PC-3 (cell line): ENCODE measurements at regions of chr14 and their contacts with region 1.

Region 1: DNA sequence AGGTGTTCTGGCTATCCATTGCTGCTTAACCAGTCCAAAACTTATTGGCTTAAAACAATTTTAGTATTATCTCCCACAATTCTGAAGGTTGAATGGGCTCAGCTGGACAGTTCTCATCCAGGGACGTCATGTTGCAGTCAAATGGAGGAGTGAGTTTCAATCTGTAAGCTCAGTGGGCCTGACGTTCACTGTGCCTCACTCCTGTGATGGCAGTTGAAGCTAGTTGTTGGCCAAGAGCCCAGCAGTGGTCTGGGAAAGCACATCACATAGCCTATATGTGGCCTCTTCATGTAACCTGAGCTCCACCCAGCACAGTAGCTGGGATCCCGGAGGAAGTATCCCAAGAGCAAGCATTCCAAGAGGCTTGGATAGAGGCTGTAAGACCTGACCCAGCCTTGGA is 40.6 kb upstream of the CDKN3 start:
- DNase-seq: peak; percentile 100
- ATAC-seq: peak; percentile 83
- H3K4me3 ChIP-seq: peak overlapping the region; percentile 27
- H3K27ac ChIP-seq: peak overlapping the region; percentile 88
- H3K4me1 ChIP-seq: peaks cover 53% of the 10 kb centered on the region
- H3K27me3 ChIP-seq: no peaks in the 10 kb centered on the region
- CTCF ChIP-seq: no peak

Region 2: GRCh38 chr14:54488646-54489317 is 132.6 kb after region 1 on chr14 and contains the start of gene GMFB:
- CTCF ChIA-PET with region 1: no interaction called
- POLR2A ChIA-PET with region 1: interaction called, 13 read pairs
- intact Hi-C with region 1: no loop called
- DNase-seq: peak; percentile 99
- ATAC-seq: peak; percentile 91
- H3K4me3 ChIP-seq: peak within 1 kb of the TSS; percentile 80
- H3K27ac ChIP-seq: peak within 1 kb of the TSS; percentile 86
- H3K4me1 ChIP-seq: peaks cover 42% of the 10 kb centered on the region
- H3K27me3 ChIP-seq: no peaks in the 10 kb centered on the region
- CTCF ChIP-seq: peak; percentile 68
- total RNA-seq, gene GMFB: 45.2 and 85.2 TPM in 2 replicates